OCI-LY7 (cell line): ENCODE measurements at regions of chr17 and their contacts with region 1.

Region 1: DNA sequence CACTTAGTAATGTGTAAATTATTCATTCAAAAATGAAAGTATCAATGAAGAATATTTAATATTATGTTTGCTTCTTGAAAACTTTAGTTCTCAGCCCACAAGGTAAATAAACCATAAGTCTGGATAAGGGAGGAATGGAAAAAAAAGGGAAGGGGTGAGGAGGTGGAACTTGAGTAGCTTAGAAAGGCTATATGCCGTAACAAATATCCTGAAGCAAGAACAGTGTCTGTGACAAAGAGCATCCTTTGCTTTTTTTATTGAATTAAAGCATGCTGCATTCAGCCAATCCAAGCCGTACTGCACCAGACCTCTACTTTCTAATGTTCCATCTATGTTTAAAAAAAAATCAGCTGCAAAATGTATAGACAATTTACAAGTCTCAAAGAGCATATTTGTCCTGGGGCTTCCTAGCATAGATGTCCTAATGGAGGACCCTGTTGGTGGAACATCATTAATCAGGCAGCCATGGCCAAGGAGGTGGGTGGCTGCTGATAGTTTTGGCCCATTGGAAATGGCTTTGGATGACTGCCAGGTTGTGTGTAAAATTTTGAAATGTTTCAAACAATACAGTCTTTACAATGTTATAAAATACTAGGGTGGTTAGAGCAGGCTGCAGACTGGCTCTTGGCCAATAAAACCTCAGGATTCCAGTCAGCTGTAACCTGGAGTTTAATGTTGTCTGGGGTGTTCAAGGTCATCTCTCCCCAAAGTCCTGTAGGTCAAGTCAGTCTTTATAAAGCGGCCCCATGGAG is 895.8 kb upstream of the SOX9 start:
- DNase-seq: no peak
- H3K4me3 ChIP-seq: no peak overlapping the region
- H3K27ac ChIP-seq: no peak overlapping the region
- H3K4me1 ChIP-seq: no peaks in the 10 kb centered on the region
- CTCF ChIP-seq: no peak

Region 2: GRCh38 chr17:71163121-71163812 is 61.7 kb before region 1 on chr17:
- CTCF ChIA-PET with region 1: no interaction called
- POLR2A ChIA-PET with region 1: no interaction called
- intact Hi-C with region 1: loop called (anchors 10 kb)
- DNase-seq: no peak
- H3K4me3 ChIP-seq: no peak overlapping the region
- H3K27ac ChIP-seq: no peak overlapping the region
- H3K4me1 ChIP-seq: no peaks in the 10 kb centered on the region
- CTCF ChIP-seq: no peak

Region 3: DNA sequence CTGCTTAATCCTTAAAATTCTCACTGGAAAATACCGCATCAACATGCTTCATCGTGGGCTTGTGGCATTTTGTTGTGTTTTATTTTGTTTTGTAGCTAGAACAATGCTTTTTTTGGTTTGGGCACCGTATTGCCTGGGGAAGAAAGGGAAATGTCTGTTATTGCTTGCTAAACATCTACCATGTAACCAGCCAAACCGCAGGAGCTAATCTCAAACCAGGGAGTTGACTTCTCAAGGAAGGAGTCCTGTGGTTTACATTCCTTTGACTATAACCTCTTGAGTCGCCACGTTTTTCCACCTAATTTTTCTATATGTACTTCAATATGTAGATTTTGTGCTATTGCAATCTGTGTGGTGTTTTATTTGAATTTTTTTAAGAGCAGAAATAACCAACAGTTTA is 302.3 kb after region 1 on chr17:
- CTCF ChIA-PET with region 1: no interaction called
- POLR2A ChIA-PET with region 1: no interaction called
- intact Hi-C with region 1: no loop called
- DNase-seq: no peak
- H3K4me3 ChIP-seq: no peak overlapping the region
- H3K27ac ChIP-seq: no peak overlapping the region
- H3K4me1 ChIP-seq: no peaks in the 10 kb centered on the region
- CTCF ChIP-seq: no peak